KBM-7 (cell line): ENCODE measurements at regions of chr20 and their contacts with region 1.

Region 1: DNA sequence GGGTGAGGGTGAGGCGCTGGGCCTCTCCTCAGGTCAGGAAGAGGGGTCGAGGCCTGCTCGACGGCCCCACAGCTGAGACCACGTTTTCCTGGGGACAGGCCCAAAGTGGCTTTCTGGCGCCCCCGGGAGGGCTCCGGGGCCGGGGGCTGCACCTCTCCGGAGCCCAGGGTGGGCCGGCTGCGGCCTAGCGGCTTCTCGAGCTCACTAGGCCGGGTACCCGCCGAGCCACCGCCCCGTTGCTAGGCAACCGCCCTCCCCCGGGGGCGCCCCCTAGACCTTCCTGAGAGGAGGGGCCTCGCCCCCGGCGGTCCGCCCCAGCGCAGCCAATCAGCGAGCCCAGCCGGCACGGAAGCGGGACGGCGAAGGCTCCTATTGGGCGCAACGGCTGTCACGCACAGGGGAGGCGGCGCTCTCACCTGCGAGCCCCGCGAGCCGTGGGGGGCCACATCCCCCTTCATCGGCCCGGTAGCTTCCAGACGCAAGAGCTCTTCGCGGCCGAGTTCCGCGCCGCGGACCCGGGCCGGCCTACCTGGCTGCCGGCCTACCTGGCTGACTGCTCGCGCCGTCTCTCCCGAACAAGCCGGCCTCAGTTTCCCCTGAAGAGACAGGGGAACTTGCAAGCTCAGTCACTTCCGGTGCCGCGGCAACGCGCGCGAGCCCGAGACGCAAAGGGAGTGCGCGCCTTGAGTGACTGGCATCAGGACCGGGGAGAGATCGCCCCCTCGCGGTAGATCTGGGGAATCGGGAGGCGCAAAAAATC is 831 bp upstream of the BCL2L1 start:
- DNase-seq: peak; percentile 98

Region 2: GRCh38 chr20:31661625-31662371 is 61.7 kb before region 1 on chr20:
- in situ Hi-C with region 1: loop called (anchors 10 kb)
- DNase-seq: peak; percentile 70

Region 3: DNA sequence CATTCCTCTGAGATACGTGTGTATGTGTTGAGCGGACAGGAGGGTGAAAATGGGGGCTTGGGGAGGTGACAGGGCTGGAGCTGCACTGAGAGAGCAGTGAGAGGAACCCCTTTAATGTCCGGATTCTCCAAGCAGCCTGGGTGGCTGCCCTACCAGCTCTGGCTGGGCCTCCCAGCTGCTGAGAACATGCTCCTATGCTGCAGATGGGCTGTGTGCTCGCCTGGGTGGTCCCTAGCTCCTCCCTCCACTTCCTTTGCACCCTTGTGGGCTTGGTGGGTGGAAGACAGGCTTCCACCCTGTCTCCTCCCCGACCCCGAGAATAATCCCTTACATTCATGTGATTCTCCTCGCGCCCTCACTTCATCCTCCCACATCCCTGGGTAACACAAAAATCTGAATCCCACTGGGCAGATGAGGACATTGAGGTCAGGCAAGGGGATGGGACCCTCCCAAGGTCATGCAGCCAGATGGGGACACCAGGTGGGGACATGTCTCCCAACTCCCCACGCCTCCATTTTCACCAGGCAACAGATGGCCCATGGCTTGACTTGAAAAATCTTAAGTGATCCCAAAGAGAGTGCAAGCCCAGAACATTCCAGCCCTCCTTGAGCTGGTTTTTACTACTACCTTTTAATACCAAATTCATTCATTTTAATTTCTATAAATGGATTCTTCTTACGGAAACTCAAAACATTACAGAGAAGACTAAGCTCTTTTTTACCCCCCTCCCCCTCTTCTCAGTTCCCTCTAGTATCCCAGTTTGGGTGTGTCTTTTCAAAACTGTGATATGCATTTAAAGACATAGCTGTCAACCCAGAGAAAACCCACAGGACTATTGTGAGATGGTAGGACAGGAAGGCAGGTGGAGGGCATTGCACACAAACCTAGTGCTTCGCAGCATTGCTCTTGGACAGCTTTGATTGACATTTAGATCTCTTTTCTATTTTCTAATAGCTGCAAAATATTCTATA is 233.3 kb after region 1 on chr20:
- in situ Hi-C with region 1: no loop called
- DNase-seq: no peak